CD4-positive, alpha-beta T cell (primary cell): ENCODE measurements at regions of chr1 and their contacts with region 1.

Region 1: GRCh38 chr1:93909146-93910050 is at the start of gene GCLM:
- DNase-seq: peak; percentile 78 to 95 (median 86)
- ATAC-seq: peak; percentile 89
- H3K4me3 ChIP-seq: peak within 1 kb of the TSS; percentile 68
- H3K4me3 Mint-ChIP-seq: peak within 1 kb of the TSS; percentile 96
- H3K27ac ChIP-seq: peak within 1 kb of the TSS; percentile 25 to 73
- H3K27ac Mint-ChIP-seq: peak within 1 kb of the TSS; percentile 83
- H3K4me1 ChIP-seq: peaks cover 20% of the 10 kb centered on the region
- H3K4me1 Mint-ChIP-seq: peaks cover 44% of the 10 kb centered on the region
- H3K27me3 ChIP-seq: no peaks in the 10 kb centered on the region
- H3K27me3 Mint-ChIP-seq: no peaks in the 10 kb centered on the region
- CTCF ChIP-seq: peak; percentile 78
- total RNA-seq, gene GCLM: 6.1 to 6.8 TPM

Region 2: DNA sequence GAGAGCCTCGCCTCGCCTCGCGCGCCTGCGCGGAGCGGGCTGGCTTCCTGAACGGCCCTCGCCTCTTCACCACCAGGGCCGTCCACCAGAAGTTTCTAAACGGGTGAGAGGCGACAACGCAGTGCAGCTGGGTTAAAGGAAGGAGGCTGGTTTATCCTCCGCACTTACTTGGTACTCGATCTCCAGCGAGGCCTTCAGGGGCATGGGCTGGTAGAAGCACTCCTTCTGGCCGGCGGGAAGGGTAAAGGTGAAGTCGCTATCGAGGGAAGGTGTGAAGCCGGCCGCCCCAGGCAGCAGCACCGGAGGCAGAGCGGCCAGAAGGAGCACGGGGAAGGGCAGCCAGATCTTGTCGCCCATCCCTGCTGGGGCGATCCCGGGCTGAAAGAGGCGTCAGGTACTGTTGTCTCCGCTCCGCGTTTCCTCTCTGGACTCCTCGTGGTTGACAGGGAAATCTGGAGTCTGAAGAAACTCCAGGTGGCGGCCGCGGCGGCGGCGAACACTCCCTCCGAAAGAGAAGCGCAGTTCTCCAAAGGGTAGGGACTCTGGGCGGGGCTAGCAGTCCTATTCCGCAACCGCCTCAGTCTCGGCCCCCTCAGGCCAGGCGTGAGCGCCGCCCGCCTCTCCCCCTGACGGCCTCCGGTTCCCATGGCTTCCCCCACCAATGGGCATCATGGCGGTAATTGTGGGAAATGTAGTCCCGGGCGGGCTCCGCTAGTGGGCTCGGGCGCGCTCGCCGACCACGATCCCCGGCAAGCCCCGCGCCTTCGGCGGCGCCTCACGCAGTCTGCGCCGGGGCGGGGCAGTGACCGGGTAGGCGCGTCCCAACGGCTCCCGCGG is 729.3 kb before region 1 on chr1 and contains the start of gene TMED5:
- CTCF ChIA-PET with region 1: no interaction called
- POLR2A ChIA-PET with region 1: no interaction called
- intact Hi-C with region 1: loop called in 1 of 2 experiments (anchors 10 kb)
- DNase-seq: peak; percentile 88 to 99 (median 94)
- ATAC-seq: peak; percentile 78
- H3K4me3 ChIP-seq: peak within 1 kb of the TSS; percentile 91
- H3K4me3 Mint-ChIP-seq: peak within 1 kb of the TSS; percentile 93
- H3K27ac ChIP-seq: peak within 1 kb of the TSS; percentile 97 to 98
- H3K27ac Mint-ChIP-seq: peak within 1 kb of the TSS; percentile 95
- H3K4me1 ChIP-seq: peaks cover 25% of the 10 kb centered on the region
- H3K4me1 Mint-ChIP-seq: peaks cover 52% of the 10 kb centered on the region
- H3K27me3 ChIP-seq: no peaks in the 10 kb centered on the region
- H3K27me3 Mint-ChIP-seq: no peaks in the 10 kb centered on the region
- CTCF ChIP-seq: peak; percentile 14
- total RNA-seq, gene TMED5: 42.3 to 43.2 TPM

Region 3: DNA sequence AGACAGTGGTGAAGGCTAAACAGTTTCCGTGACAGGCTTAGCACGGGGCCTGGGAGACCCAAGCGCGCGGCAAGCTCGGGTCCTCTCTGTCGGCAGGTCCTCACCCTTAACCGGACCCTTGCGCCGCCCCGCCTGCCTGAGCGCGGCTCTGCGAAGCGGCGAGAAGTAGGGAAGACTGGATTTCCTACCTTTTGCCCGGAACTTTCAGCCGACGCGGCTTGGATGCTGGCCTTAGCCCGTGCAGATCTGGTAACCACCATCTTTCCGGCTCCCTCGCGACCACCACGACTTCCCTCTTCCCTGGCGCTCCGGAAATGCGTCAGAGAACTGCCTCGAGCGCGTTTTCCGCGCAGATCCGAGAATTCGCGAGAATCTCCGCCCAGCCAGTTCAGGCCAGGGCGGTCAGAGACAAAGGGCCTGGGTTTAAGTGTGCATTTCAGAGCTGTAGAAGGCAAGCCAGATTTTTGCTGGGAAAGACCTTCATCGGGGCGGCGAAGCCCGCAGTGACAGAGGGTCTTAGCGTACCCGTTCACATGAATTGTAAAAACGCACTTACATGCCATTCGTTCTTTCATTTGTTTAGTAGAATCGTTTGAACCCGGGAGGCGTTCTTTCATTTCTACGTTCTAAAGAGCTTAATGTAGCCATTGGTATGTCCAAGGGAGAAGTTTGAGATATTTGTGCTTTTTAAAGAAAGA is 30.4 kb before region 1 on chr1 and contains the start of gene DNTTIP2:
- CTCF ChIA-PET with region 1: interaction called, 16 read pairs
- POLR2A ChIA-PET with region 1: interaction called, 50 read pairs
- intact Hi-C with region 1: loop called (anchors 1 to 2 kb)
- DNase-seq: peak; percentile 78 to 93 (median 82)
- ATAC-seq: peak; percentile 82
- H3K4me3 ChIP-seq: peak within 1 kb of the TSS; percentile 91
- H3K4me3 Mint-ChIP-seq: peak within 1 kb of the TSS; percentile 100
- H3K27ac ChIP-seq: peak within 1 kb of the TSS; percentile 85 to 94
- H3K27ac Mint-ChIP-seq: peak within 1 kb of the TSS; percentile 98
- H3K4me1 ChIP-seq: peaks cover 26% of the 10 kb centered on the region
- H3K4me1 Mint-ChIP-seq: peaks cover 45% of the 10 kb centered on the region
- H3K27me3 ChIP-seq: no peaks in the 10 kb centered on the region
- H3K27me3 Mint-ChIP-seq: no peaks in the 10 kb centered on the region
- CTCF ChIP-seq: no peak
- total RNA-seq, gene DNTTIP2: 110 to 120 TPM

Region 4: GRCh38 chr1:93919780-93920179 is 10.4 kb after region 1 on chr1:
- CTCF ChIA-PET with region 1: no interaction called
- POLR2A ChIA-PET with region 1: no interaction called
- intact Hi-C with region 1: no loop called
- DNase-seq: no peak
- ATAC-seq: no peak
- H3K4me3 ChIP-seq: no peak overlapping the region
- H3K4me3 Mint-ChIP-seq: no peak overlapping the region
- H3K27ac ChIP-seq: no peak overlapping the region
- H3K27ac Mint-ChIP-seq: no peak overlapping the region
- H3K4me1 ChIP-seq: no peaks in the 10 kb centered on the region
- H3K4me1 Mint-ChIP-seq: no peaks in the 10 kb centered on the region
- H3K27me3 ChIP-seq: no peaks in the 10 kb centered on the region
- H3K27me3 Mint-ChIP-seq: no peaks in the 10 kb centered on the region
- CTCF ChIP-seq: no peak

Region 5: DNA sequence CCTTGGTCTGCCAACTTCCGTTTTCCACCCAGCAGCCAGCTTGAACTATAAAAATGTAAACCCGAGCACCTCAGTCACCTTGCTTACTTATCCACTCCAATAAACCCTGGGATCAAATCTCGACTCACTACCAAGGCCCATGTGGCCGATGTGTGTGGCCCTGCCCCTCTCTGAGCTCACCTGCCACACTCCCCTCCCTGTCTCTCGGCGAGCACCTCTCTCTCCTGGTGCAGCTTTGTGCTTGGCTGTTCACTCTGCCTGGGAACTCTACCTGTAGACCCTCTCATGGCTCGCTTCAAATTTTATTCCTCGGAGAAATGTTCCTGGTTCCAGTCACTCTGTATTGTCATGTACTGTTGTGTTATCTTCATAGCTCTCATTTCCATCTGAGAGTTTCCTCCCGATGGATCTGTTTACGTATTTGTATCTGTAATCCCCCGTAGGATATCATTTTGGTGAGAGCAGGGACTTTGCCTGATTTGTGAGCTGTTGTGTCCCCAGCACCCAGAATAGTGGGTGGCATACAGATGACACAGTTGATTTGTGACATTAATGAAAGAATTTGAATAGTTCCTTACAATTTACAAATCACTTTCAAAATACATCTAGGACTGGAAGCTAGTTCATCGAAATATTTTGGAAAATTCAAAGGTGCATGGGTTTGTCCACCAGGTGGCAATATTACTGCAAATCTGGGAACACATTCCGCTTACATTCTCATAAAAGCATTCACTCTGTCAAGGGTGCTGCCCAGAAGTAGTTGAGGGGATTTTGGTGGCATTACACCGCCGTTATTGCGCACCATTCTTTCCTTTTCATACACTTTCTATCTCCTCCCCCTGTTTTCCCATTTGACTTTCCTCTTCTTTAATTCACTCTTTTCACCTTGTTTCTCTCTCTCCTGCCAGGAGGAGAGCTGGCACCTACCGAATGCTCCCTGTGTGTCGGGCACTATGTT is 116.3 kb after region 1 on chr1:
- CTCF ChIA-PET with region 1: no interaction called
- POLR2A ChIA-PET with region 1: no interaction called
- intact Hi-C with region 1: no loop called
- DNase-seq: peak in 3 of 14 experiments; percentile 20 to 31 (median 22)
- ATAC-seq: no peak
- H3K4me3 ChIP-seq: no peak overlapping the region
- H3K4me3 Mint-ChIP-seq: no peak overlapping the region
- H3K27ac ChIP-seq: no peak overlapping the region
- H3K27ac Mint-ChIP-seq: no peak overlapping the region
- H3K4me1 ChIP-seq: no peaks in the 10 kb centered on the region
- H3K4me1 Mint-ChIP-seq: no peaks in the 10 kb centered on the region
- H3K27me3 ChIP-seq: no peaks in the 10 kb centered on the region
- H3K27me3 Mint-ChIP-seq: peaks cover 9% of the 10 kb centered on the region
- CTCF ChIP-seq: peak; percentile 54

Region 6: GRCh38 chr1:94081566-94082344 is 172.4 kb after region 1 on chr1:
- CTCF ChIA-PET with region 1: no interaction called
- POLR2A ChIA-PET with region 1: no interaction called
- intact Hi-C with region 1: no loop called
- DNase-seq: no peak
- ATAC-seq: no peak
- H3K4me3 ChIP-seq: no peak overlapping the region
- H3K4me3 Mint-ChIP-seq: no peak overlapping the region
- H3K27ac ChIP-seq: no peak overlapping the region
- H3K27ac Mint-ChIP-seq: no peak overlapping the region
- H3K4me1 ChIP-seq: no peaks in the 10 kb centered on the region
- H3K4me1 Mint-ChIP-seq: no peaks in the 10 kb centered on the region
- H3K27me3 ChIP-seq: peaks cover 0 to 13% of the 10 kb centered on the region in 2 experiments
- H3K27me3 Mint-ChIP-seq: no peaks in the 10 kb centered on the region
- CTCF ChIP-seq: no peak

Region 7: GRCh38 chr1:94417978-94418663 is 508.7 kb after region 1 on chr1 and contains the start of gene ABCD3:
- CTCF ChIA-PET with region 1: no interaction called
- POLR2A ChIA-PET with region 1: no interaction called
- intact Hi-C with region 1: loop called (anchors 1 to 5 kb)
- DNase-seq: peak; percentile 92 to 99 (median 97)
- ATAC-seq: peak; percentile 87
- H3K4me3 ChIP-seq: peak within 1 kb of the TSS; percentile 82
- H3K4me3 Mint-ChIP-seq: no peak within 1 kb of the TSS
- H3K27ac ChIP-seq: peak within 1 kb of the TSS; percentile 61 to 77
- H3K27ac Mint-ChIP-seq: no peak within 1 kb of the TSS
- H3K4me1 ChIP-seq: peaks cover 14% of the 10 kb centered on the region
- H3K4me1 Mint-ChIP-seq: peaks cover 41% of the 10 kb centered on the region
- H3K27me3 ChIP-seq: no peaks in the 10 kb centered on the region
- H3K27me3 Mint-ChIP-seq: no peaks in the 10 kb centered on the region
- CTCF ChIP-seq: no peak
- total RNA-seq, gene ABCD3: 13.0 to 13.5 TPM

Region 8: GRCh38 chr1:94660994-94661393 is 751.6 kb after region 1 on chr1:
- CTCF ChIA-PET with region 1: no interaction called
- POLR2A ChIA-PET with region 1: no interaction called
- intact Hi-C with region 1: no loop called
- DNase-seq: no peak
- ATAC-seq: no peak
- H3K4me3 ChIP-seq: no peak overlapping the region
- H3K4me3 Mint-ChIP-seq: no peak overlapping the region
- H3K27ac ChIP-seq: no peak overlapping the region
- H3K27ac Mint-ChIP-seq: no peak overlapping the region
- H3K4me1 ChIP-seq: no peaks in the 10 kb centered on the region
- H3K4me1 Mint-ChIP-seq: no peaks in the 10 kb centered on the region
- H3K27me3 ChIP-seq: no peaks in the 10 kb centered on the region
- H3K27me3 Mint-ChIP-seq: no peaks in the 10 kb centered on the region
- CTCF ChIP-seq: no peak